Right cardiac atrium (tissue), 5 donors: ENCODE measurements at regions of chr21 and their contacts with region 1.

Region 1: GRCh38 chr21:43728467-43729390 is 9.8 kb downstream of the PDXK start:
- DNase-seq: peak; percentile 97 to 98 (median 98)
- ATAC-seq: peak; percentile 92
- H3K4me3 ChIP-seq: peak overlapping the region; percentile 53
- H3K27ac ChIP-seq: peak overlapping the region; percentile 75
- H3K4me1 ChIP-seq: peaks cover 11% of the 10 kb centered on the region
- H3K27me3 ChIP-seq: no peaks in the 10 kb centered on the region

Region 2: GRCh38 chr21:43657355-43658085 is 71.2 kb before region 1 on chr21:
- intact Hi-C with region 1: no loop called
- DNase-seq: peak; percentile 56 to 75 (median 73)
- ATAC-seq: peak in 1 of 2 donors; percentile 71
- H3K4me3 ChIP-seq: no peak overlapping the region
- H3K27ac ChIP-seq: no peak overlapping the region
- H3K4me1 ChIP-seq: peaks cover 4% of the 10 kb centered on the region
- H3K27me3 ChIP-seq: no peaks in the 10 kb centered on the region

Region 3: GRCh38 chr21:43775795-43776430 is 47.2 kb after region 1 on chr21 and contains the start of gene CSTB:
- intact Hi-C with region 1: loop called in 1 of 4 experiments (anchors 5 kb)
- DNase-seq: peak; percentile 90 to 95 (median 94)
- ATAC-seq: peak; percentile 85 to 86
- H3K4me3 ChIP-seq: peak within 1 kb of the TSS; percentile 84
- H3K27ac ChIP-seq: peak within 1 kb of the TSS; percentile 91
- H3K4me1 ChIP-seq: peaks cover 2% of the 10 kb centered on the region
- H3K27me3 ChIP-seq: no peaks in the 10 kb centered on the region
- total RNA-seq, gene CSTB: 28.6 to 36.2 (median 31.8) TPM